ENCODE measurements at regions of chr6 and their contacts with region 1.

Region 1: GRCh38 chr6:63352587-63353285 is 33.0 kb upstream of the LGSN start:
- DNase-seq: no peak
- H3K4me3 ChIP-seq: no peak overlapping the region
- H3K27ac ChIP-seq: no peak overlapping the region
- H3K4me1 ChIP-seq: peaks cover 0 to 4% (median 0%) of the 10 kb centered on the region in 4 donors
- H3K27me3 ChIP-seq: no peaks in the 10 kb centered on the region
- CTCF ChIP-seq: peak; percentile 25 to 61 (median 31)
- EP300 ChIP-seq: no peak
- POLR2A ChIP-seq: no peak

Region 2: GRCh38 chr6:63415286-63415685 is 62.5 kb after region 1 on chr6:
- intact Hi-C with region 1: no loop called
- DNase-seq: no peak
- H3K4me3 ChIP-seq: no peak overlapping the region
- H3K27ac ChIP-seq: no peak overlapping the region
- H3K4me1 ChIP-seq: no peaks in the 10 kb centered on the region
- H3K27me3 ChIP-seq: no peaks in the 10 kb centered on the region
- CTCF ChIP-seq: no peak
- EP300 ChIP-seq: no peak
- POLR2A ChIP-seq: no peak

Region 3: GRCh38 chr6:63441266-63441956 is 88.7 kb after region 1 on chr6:
- intact Hi-C with region 1: loop called (anchors 5 kb)
- DNase-seq: no peak
- H3K4me3 ChIP-seq: no peak overlapping the region
- H3K27ac ChIP-seq: no peak overlapping the region
- H3K4me1 ChIP-seq: peaks cover 0 to under 1% (median under 1%) of the 10 kb centered on the region in 4 donors
- H3K27me3 ChIP-seq: no peaks in the 10 kb centered on the region
- CTCF ChIP-seq: no peak
- EP300 ChIP-seq: no peak
- POLR2A ChIP-seq: no peak

Measured in sigmoid colon (tissue), 7 donors.